Uterus (tissue), 4 donors: ENCODE measurements at regions of chr4 and their contacts with region 1.

Region 1: DNA sequence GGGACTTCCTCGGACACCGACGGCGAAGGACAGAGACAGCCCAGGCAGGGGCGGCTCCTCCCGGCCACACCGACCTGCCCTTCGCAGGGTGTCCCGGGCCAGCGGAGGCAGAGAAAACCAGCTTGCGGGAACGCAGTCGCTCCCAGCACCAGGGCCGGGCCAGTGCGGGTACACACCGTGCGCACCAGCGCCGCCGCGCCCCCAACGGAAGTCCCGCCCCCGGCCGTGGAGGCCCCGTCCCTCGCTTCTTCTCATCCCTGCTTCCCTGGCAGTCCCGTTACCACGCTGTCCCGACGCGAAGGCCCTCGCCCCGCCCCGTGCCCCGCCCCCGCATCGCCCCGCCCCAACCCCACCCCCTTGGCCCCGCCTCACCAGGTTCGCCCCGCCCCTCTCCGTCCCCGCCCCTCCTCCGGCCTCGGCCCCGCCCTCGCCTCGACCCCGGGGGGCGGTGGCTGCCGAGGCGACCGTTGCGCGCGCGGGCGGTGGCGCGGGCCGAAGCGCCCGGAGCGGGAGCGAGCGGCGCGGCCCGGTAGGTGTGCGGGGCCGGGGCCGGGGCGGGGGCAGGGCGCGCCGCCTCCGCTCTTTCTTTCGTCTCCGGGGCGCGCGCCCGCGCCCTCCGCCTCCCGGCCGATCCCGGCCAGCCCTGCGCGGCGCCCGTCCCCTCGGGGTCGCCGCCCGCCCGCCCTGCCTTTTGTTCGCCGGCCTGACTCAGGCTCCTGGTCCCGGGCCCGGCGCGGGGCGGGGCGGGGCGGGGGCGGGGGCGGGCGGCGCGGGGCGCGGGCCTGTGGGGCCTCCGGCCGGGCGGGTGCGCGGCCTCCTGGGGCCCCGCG is at the start of gene RGS12:
- DNase-seq: peak; percentile 95
- H3K4me3 ChIP-seq: peak within 1 kb of the TSS; percentile 68 to 76
- H3K27ac ChIP-seq: peak within 1 kb of the TSS; percentile 81 to 91
- H3K4me1 ChIP-seq: peaks cover 4 to 11% of the 10 kb centered on the region in 2 donors
- H3K27me3 ChIP-seq: no peaks in the 10 kb centered on the region
- CTCF ChIP-seq: no peak
- POLR2A ChIP-seq: peak; percentile 77 to 90
- total RNA-seq, gene RGS12: 3.5 to 63.8 (median 40.1) TPM

Region 2: DNA sequence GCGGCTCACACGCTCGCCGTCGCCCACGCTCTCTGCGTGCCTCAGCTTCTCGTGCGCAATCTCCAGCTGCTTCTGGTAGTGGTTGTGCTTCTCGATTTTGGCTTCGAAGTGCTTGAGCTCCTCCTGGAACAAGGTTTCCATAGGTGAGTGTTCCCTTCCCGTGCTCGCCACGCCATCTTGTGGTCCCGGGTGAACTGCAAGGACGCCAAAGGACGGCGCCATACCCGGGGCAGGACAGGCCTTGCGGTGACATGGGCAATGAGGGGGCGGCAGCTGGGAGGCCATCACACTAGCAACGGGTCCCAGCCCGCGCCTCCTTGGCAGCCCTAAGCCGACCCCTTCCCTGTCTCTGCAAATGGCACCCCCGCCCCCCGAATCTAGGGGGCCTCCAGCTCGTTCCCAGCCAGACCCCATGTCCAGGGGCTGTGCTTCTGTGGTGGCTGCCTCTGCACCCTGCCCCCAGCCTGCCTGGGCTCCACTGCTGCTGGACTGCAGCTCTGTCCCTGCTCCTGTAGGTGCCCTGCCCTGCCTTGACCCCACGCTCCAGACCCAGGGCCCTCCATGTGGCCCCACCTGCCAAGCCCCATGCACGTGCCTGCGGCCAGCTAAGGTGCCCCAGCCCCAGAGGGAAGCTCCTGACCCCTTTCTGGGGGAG is 222.1 kb after region 1 on chr4:
- intact Hi-C with region 1: no loop called
- DNase-seq: no peak
- H3K4me3 ChIP-seq: no peak overlapping the region
- H3K27ac ChIP-seq: no peak overlapping the region
- H3K4me1 ChIP-seq: no peaks in the 10 kb centered on the region
- H3K27me3 ChIP-seq: no peaks in the 10 kb centered on the region
- CTCF ChIP-seq: no peak
- POLR2A ChIP-seq: no peak

Region 3: DNA sequence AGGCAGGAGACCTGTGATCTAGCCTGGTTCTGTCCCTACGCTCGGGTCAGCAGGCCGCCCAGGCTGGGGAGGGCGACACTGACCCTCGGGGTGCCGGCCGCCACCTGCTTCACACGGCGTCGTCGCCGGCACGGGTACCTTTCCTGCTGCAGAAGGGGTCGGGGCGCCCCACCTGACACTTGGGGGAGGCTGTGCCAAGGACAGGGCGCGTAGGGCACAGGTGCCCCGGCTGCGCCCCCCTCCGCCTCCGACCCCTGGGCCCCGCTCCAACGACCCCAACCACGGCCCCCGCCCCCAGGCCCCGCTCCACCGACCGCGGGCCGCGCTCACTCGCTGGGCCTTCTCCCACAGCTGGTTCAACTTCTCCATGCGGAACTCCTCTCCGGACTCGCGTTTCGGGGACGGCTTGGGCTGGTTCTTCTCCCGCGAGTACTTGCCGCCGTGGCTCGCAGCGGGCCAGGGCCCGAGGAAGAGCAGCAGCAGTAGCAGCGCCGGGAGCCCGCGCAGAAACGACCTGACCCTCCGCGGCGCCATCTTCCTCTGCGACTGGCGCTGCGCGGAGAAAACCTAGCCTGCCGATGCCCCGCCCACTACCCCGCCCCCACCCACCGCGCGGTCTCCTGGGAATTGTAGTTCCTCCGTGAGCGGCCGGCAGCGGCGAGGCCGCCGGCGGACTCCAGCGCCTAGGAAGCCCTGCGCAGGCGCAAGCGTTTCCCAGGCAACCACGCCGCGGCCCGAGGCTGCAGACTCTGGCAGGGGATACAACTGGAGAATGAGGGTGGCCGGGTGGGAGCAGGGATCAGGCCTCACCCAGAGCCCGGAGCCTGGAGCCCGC is 239.3 kb after region 1 on chr4 and contains the start of gene LRPAP1:
- intact Hi-C with region 1: loop called (anchors 5 kb)
- DNase-seq: peak; percentile 89 to 94
- H3K4me3 ChIP-seq: peak within 1 kb of the TSS; percentile 77 to 86
- H3K27ac ChIP-seq: peak within 1 kb of the TSS; percentile 13 to 71
- H3K4me1 ChIP-seq: peaks cover 0 to 11% of the 10 kb centered on the region in 2 donors
- H3K27me3 ChIP-seq: no peaks in the 10 kb centered on the region
- CTCF ChIP-seq: no peak
- POLR2A ChIP-seq: peak; percentile 86 to 93
- total RNA-seq, gene LRPAP1: 8.8 to 260 (median 164) TPM